Activated CD8-positive, alpha-beta T cell treated with anti-CD3 and anti-CD28 coated beads, Interleukin-2, amount 10 ng/mL, durations not matched to agents 7 days and 5 days (primary cell): ENCODE measurements at regions of chr13 and their contacts with region 1.

Region 1: GRCh38 chr13:49278211-49278610 is 30.5 kb downstream of the CDADC1 start:
- DNase-seq: no peak
- ATAC-seq: no peak
- H3K4me3 Mint-ChIP-seq: no peak overlapping the region
- H3K27ac Mint-ChIP-seq: no peak overlapping the region
- H3K4me1 Mint-ChIP-seq: no peaks in the 10 kb centered on the region
- H3K27me3 Mint-ChIP-seq: no peaks in the 10 kb centered on the region

Region 2: DNA sequence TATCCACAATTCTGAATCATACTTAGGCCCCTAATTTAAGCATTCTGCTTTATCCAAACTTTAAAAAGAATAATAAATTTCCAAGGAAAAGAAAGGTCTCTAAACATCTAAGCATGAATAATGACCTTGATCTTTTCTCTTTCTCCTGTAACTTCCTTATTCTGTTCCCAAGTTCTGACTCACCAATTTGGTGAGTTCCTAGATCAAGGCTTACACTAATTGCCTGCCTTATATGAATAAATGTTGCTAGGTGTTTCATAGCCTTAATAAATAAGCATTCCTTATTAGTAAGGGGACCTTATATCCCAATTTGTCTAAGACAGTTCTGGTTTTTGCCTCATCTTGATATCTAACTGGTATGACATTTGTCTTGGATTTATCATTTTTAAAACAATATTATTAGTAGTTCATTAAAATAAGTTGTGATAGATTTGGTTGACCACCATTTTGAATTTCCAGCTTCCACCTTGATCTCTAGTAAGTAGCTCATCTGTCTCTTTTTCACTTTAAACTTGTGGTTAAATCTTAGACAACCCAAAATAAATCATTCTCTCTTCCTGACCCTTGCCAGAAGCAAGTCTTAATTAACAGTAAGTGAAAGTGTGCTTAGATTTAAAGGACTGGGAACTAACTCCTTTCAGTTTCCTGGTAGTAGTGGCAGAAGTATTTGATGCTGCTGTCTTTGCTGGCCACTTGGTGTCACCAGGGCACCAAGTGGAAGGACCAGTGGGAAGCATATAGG is 179.3 kb before region 1 on chr13:
- CTCF ChIA-PET with region 1: interaction called, 15 read pairs
- POLR2A ChIA-PET with region 1: no interaction called
- DNase-seq: no peak
- ATAC-seq: no peak
- H3K4me3 Mint-ChIP-seq: no peak overlapping the region
- H3K27ac Mint-ChIP-seq: no peak overlapping the region
- H3K4me1 Mint-ChIP-seq: peaks cover 2% of the 10 kb centered on the region
- H3K27me3 Mint-ChIP-seq: no peaks in the 10 kb centered on the region

Region 3: GRCh38 chr13:49240017-49240416 is 38.2 kb before region 1 on chr13:
- CTCF ChIA-PET with region 1: interaction called, 89 read pairs
- POLR2A ChIA-PET with region 1: no interaction called
- DNase-seq: peak; percentile 57
- ATAC-seq: peak; percentile 86
- H3K4me3 Mint-ChIP-seq: no peak overlapping the region
- H3K27ac Mint-ChIP-seq: no peak overlapping the region
- H3K4me1 Mint-ChIP-seq: peaks cover 4% of the 10 kb centered on the region
- H3K27me3 Mint-ChIP-seq: peaks cover 19% of the 10 kb centered on the region

Region 4: GRCh38 chr13:49256841-49257240 is 21.4 kb before region 1 on chr13:
- CTCF ChIA-PET with region 1: interaction called, 22 read pairs
- POLR2A ChIA-PET with region 1: no interaction called
- DNase-seq: no peak
- ATAC-seq: no peak
- H3K4me3 Mint-ChIP-seq: no peak overlapping the region
- H3K27ac Mint-ChIP-seq: peak overlapping the region; percentile 35
- H3K4me1 Mint-ChIP-seq: peaks cover 39% of the 10 kb centered on the region
- H3K27me3 Mint-ChIP-seq: no peaks in the 10 kb centered on the region

Region 5: GRCh38 chr13:49606747-49607648 is 328.8 kb after region 1 on chr13:
- CTCF ChIA-PET with region 1: interaction called, 13 read pairs
- POLR2A ChIA-PET with region 1: no interaction called
- DNase-seq: peak; percentile 87
- ATAC-seq: peak; percentile 100
- H3K4me3 Mint-ChIP-seq: peak overlapping the region; percentile 78
- H3K27ac Mint-ChIP-seq: peak overlapping the region; percentile 78
- H3K4me1 Mint-ChIP-seq: peaks cover 4% of the 10 kb centered on the region
- H3K27me3 Mint-ChIP-seq: peaks cover 4% of the 10 kb centered on the region